Right ventricle myocardium inferior (tissue), 1 donor: ENCODE measurements at regions of chr7 and their contacts with region 1.

Region 1: GRCh38 chr7:23679898-23680413 is at the start of gene FAM221A:
- DNase-seq: peak; percentile 94
- ATAC-seq: peak; percentile 100
- total RNA-seq, gene FAM221A: 2.6 TPM

Region 2: GRCh38 chr7:23597094-23598091 is 82.6 kb before region 1 on chr7 and contains the start of gene CCDC126:
- intact Hi-C with region 1: loop called (anchors 1 kb)
- DNase-seq: peak; percentile 97
- ATAC-seq: peak; percentile 99
- total RNA-seq, gene CCDC126: 8.5 TPM

Region 3: DNA sequence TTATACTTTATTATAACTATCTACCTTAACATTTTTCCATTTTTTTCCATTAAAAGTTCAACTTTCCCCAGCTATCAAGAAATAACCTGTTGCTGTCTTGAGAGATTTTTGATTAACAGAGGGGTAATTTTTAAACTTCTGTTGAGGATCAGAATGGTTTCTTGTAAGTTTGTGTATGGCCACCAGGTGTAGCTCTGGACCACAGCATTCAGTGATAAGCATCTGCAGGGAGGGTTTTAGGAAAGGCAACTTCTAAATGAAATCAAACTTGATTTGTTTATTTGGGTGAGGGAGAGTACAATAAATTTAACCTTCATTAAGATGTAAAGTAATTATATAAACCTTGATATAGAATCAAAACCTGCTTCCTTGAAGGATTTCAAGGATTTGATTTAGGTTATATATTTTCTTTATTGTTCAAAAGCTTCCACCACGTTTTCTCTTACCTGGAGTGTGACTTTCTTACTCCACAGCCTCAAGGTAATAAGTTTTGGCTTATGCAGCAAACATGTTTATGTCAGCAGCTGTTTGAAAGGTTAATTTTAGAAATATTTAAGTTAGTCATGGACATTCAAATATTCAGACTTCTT is 183.3 kb after region 1 on chr7:
- intact Hi-C with region 1: no loop called
- DNase-seq: no peak
- ATAC-seq: no peak